ENCODE measurements at regions of chr4 and their contacts with region 1.

Region 1: DNA sequence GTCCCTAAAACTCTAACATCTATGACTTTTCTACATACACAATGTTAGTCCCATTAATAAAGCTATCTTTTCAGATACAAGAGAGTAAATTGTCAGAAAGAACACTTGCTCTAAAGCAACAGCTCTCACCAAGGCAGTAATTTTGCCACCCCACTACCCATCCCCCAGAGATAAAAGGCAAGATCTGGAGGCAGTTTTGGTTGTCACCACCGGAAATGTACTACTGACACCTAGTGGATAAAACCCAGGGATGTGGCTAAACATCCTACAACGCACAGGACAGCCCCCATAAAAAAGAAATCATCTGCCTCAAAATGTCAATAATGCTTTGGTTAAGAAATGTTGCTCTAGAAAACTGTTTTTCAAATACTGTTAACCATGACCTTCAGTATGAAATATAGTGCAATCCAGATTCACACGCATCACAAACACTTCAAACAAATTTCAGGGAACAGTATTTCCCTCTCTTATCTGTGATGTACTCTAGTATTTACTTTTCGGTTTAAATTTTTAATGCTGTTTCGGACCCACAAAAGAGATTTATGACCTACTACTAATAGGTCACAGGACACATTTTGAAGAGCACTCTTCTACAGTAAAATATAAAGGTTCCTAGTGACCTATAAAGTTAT is 5.1 kb downstream of the FBXL5 start:
- DNase-seq: peak in 2 of 5 donors; percentile 35 to 40
- ATAC-seq: peak; percentile 43 to 75 (median 68)
- H3K4me3 ChIP-seq: no peak overlapping the region
- H3K27ac ChIP-seq: peak overlapping the region in 5 of 12 donors; percentile 10 to 98 (median 15)
- H3K4me1 ChIP-seq: peaks cover 6 to 81% (median 51%) of the 10 kb centered on the region in 12 donors
- H3K27me3 ChIP-seq: no peaks in the 10 kb centered on the region
- CTCF ChIP-seq: peak; percentile 43 to 75 (median 62)
- POLR2A ChIP-seq: no peak

Region 2: GRCh38 chr4:15238720-15239119 is 411.3 kb before region 1 on chr4:
- intact Hi-C with region 1: loop called in 1 of 10 experiments (anchors 5 kb)
- DNase-seq: peak in 2 of 5 donors; percentile 25 to 32
- ATAC-seq: peak; percentile 51 to 75 (median 58)
- H3K4me3 ChIP-seq: no peak overlapping the region
- H3K27ac ChIP-seq: no peak overlapping the region
- H3K4me1 ChIP-seq: peaks cover 0 to 37% (median 9%) of the 10 kb centered on the region in 12 donors
- H3K27me3 ChIP-seq: no peaks in the 10 kb centered on the region
- CTCF ChIP-seq: peak; percentile 36 to 68 (median 52)
- POLR2A ChIP-seq: no peak

Region 3: DNA sequence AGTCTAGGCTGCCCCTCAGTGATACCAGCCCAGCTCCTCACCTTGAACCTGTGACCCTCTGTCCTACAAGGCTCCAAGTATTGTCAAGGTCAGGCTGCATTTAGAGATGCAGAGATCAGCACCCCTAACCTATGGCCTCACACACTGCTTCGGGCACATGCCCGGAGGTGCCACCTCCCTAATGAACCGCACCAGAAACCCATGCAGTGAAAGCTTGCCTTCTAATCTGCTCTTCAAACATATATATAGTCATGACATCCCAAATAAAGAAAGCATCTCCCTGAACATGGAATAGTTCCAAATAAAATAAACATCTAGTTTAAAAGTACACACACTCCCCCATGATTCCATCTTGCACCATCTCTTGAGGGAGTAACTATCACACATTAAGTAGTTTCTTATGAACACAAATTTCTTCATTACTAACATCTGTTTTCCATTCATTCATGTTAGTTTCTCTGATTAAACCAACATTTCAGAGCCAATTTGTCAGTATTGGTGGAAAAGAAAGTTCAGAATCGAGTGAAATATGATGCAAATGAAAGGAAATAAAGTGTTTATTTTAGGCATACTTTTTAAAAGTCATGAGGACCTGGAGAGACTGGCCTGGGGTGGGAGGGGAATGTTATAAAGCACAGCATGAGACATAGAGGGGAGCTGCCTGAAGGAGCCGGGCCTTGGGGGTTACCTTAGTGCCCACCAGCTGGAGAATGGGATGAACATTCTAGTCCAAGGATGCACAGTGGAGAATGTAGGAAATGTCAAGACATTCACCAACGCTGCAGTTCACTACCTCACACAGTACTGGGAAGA is 161.2 kb before region 1 on chr4:
- intact Hi-C with region 1: loop called in 4 of 10 experiments (anchors 5 to 10 kb)
- DNase-seq: no peak
- ATAC-seq: peak; percentile 31 to 86 (median 70)
- H3K4me3 ChIP-seq: no peak overlapping the region
- H3K27ac ChIP-seq: peak overlapping the region in 8 of 12 donors; percentile 2 to 73 (median 48)
- H3K4me1 ChIP-seq: peaks cover 0 to 22% (median 9%) of the 10 kb centered on the region in 12 donors
- H3K27me3 ChIP-seq: no peaks in the 10 kb centered on the region
- CTCF ChIP-seq: no peak
- POLR2A ChIP-seq: no peak

Region 4: DNA sequence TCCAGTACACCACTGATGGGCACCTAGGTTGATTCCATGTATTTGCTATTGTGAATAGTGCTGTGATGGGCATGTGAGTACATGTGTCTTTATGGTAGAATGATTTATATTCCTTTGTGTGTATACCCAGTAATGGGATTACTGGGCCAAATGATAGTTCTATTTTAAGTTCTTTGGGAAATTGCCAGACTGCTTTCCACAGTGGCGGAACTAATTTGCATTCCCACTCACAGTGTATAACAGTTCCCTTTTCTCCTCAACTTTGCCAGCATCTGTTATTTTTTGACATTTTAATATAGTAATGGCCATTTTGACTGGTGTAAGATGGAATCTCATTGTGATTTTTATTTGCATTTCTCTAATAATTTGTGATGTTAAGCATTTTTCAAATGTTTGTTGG is 154.4 kb before region 1 on chr4:
- intact Hi-C with region 1: loop called in 1 of 10 experiments (anchors 10 kb)
- DNase-seq: no peak
- ATAC-seq: peak in 2 of 4 donors; percentile 52 to 60
- H3K4me3 ChIP-seq: no peak overlapping the region
- H3K27ac ChIP-seq: no peak overlapping the region
- H3K4me1 ChIP-seq: peaks cover 0 to 22% (median 12%) of the 10 kb centered on the region in 12 donors
- H3K27me3 ChIP-seq: no peaks in the 10 kb centered on the region
- CTCF ChIP-seq: no peak
- POLR2A ChIP-seq: no peak